Posterior vena cava (tissue), 2 donors: ENCODE measurements at regions of chrX and their contacts with region 1.

Region 1: GRCh38 chrX:103533511-103534216 is 14.4 kb upstream of the RAB40A start:
- DNase-seq: peak; percentile 88

Region 2: GRCh38 chrX:103607364-103608305 is 74.0 kb after region 1 on chrX and contains the start of gene TCEAL3:
- intact Hi-C with region 1: loop called in 1 of 2 experiments (anchors 10 kb)
- DNase-seq: peak; percentile 87
- total RNA-seq, gene TCEAL3: 87.0 to 113 TPM

Region 3: DNA sequence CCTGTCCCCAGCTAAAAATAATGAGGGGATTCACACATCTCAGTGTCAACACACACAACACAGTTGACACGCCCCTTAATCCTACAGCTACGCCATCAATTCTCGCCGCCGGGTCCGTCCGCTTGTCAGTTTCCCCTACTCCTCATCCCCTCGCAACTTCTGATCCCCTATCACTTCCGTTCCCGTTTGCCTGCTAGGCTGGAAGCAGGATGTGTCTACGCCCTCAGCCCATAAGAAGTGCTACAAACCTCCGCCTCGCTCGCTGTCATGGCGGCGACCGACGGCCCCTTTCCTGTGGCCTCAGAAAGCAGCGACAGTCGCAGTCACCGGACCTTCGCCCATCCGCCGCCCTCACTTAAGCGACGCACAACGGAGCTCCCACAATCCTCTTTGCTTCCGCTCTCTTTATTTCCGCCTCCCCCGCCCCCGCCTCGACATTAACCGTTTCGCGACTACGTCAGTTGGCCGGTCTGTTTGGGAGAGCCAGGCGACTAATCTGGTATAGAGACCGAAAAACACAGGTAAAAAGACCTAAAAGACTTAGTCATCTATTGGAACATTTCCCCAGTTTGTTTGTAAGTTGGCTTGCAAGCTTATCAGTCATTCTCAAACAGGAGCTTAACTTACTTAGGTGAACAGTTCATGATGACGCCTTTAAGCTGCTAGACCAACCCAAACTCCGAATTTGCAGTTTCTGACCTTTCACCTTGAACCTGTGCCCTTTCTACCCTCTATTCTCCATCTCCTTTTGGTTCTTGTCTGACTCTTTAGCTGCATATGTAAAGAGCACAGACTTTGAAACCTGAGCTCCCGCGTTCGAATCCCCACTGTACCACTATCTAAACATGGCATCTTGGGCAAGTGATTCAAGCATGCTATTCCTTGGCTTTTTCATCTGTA is 623.2 kb after region 1 on chrX and contains the start of gene SLC25A53:
- intact Hi-C with region 1: loop called in 1 of 2 experiments (anchors 10 kb)
- DNase-seq: peak; percentile 92
- total RNA-seq, gene SLC25A53: 8.2 to 9.1 TPM